ENCODE measurements at regions of chr19 and their contacts with region 1.

Region 1: GRCh38 chr19:7903244-7904073 is at the start of gene MAP2K7:
- DNase-seq: peak; percentile 100
- H3K4me3 ChIP-seq: peak within 1 kb of the TSS; percentile 62 to 93 (median 71)
- H3K27ac ChIP-seq: peak within 1 kb of the TSS; percentile 62
- H3K4me1 ChIP-seq: peaks cover 16% of the 10 kb centered on the region
- H3K27me3 ChIP-seq: no peaks in the 10 kb centered on the region
- CTCF ChIP-seq: peak; percentile 64 to 67
- POLR2A ChIP-seq: peak; percentile 98
- total RNA-seq, gene MAP2K7: 31.6 and 36.0 TPM in 2 replicates

Region 2: DNA sequence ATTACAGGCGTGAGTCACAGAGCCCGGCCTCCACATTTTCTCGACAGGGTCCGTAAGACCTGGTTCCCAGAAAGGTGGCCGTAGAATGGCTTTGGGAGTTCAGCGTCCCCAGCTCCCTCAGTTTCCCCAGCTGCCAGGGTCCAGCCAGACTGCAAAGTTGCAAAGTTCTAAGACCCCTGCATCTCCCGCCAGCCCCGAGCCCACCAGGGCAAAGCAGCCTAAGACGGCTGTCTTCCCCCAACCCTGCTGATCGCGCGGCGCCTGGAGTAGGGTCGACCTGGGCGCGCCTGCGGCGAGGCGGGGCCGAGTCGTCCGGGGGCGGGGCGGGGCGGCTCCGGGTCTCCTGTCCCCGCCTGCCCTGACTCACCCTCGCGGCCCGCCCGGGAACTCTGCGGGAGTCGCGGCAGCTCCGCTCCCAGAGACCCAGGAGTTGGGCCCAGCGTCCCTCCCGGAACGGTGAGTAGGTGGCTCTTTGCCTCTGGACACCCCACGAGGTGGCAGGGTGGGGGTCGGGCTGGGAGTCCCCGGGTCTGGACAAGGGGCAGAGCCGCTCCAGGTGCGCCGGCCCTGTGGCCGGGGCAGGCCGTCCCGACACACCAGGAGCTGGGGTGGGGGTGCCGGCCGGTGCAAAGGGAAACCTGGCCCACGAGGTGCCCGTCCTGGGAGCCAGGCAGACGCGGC is 15.2 kb before region 1 on chr19 and contains the start of gene LRRC8E:
- CTCF ChIA-PET with region 1: interaction called, 3 read pairs
- POLR2A ChIA-PET with region 1: no interaction called
- dilution Hi-C with region 1: no loop called
- intact Hi-C with region 1: loop called (anchors 1 kb)
- DNase-seq: peak; percentile 33
- H3K4me3 ChIP-seq: peak within 1 kb of the TSS; percentile 31 to 43 (median 42)
- H3K27ac ChIP-seq: peak within 1 kb of the TSS; percentile 22
- H3K4me1 ChIP-seq: peaks cover 8% of the 10 kb centered on the region
- H3K27me3 ChIP-seq: no peaks in the 10 kb centered on the region
- CTCF ChIP-seq: no peak
- POLR2A ChIP-seq: no peak
- total RNA-seq, gene LRRC8E: 1.6 and 1.8 TPM in 2 replicates

Region 3: GRCh38 chr19:7919610-7920518 is 16.4 kb after region 1 on chr19 and contains the start of gene SNAPC2:
- CTCF ChIA-PET with region 1: interaction called, 9 read pairs
- POLR2A ChIA-PET with region 1: interaction called, 13 read pairs
- dilution Hi-C with region 1: no loop called
- intact Hi-C with region 1: loop called (anchors 1 kb)
- DNase-seq: peak; percentile 94
- H3K4me3 ChIP-seq: peak within 1 kb of the TSS; percentile 61 to 79 (median 63)
- H3K27ac ChIP-seq: peak within 1 kb of the TSS; percentile 13
- H3K4me1 ChIP-seq: peaks cover 22% of the 10 kb centered on the region
- H3K27me3 ChIP-seq: peaks cover 18 to 31% of the 10 kb centered on the region in 2 experiments
- CTCF ChIP-seq: no peak
- POLR2A ChIP-seq: peak; percentile 68
- total RNA-seq, gene SNAPC2: 23.7 and 29.2 TPM in 2 replicates